ENCODE measurements at regions of chr5 and their contacts with region 1.

Region 1: GRCh38 chr5:10513501-10514442 is 50.1 kb upstream of the ANKRD33B start:
- DNase-seq: no peak
- H3K4me3 Mint-ChIP-seq: no peak overlapping the region
- H3K27ac Mint-ChIP-seq: no peak overlapping the region
- H3K4me1 Mint-ChIP-seq: no peaks in the 10 kb centered on the region
- H3K27me3 Mint-ChIP-seq: peaks cover 5% of the 10 kb centered on the region

Region 2: GRCh38 chr5:9888501-9888901 is 625.3 kb before region 1 on chr5:
- intact Hi-C with region 1: no loop called
- DNase-seq: no peak
- H3K4me3 Mint-ChIP-seq: no peak overlapping the region
- H3K27ac Mint-ChIP-seq: no peak overlapping the region
- H3K4me1 Mint-ChIP-seq: no peaks in the 10 kb centered on the region
- H3K27me3 Mint-ChIP-seq: no peaks in the 10 kb centered on the region

Region 3: GRCh38 chr5:10528056-10528816 is 14.5 kb after region 1 on chr5:
- intact Hi-C with region 1: loop called (anchors 1 kb)
- DNase-seq: no peak
- H3K4me3 Mint-ChIP-seq: no peak overlapping the region
- H3K27ac Mint-ChIP-seq: no peak overlapping the region
- H3K4me1 Mint-ChIP-seq: peaks cover 2% of the 10 kb centered on the region
- H3K27me3 Mint-ChIP-seq: peaks cover 8% of the 10 kb centered on the region

Measured in activated CD4-positive, alpha-beta T cell treated with anti-CD3 and anti-CD28 coated beads, Interleukin-2, amount 10 ng/mL, durations not matched to agents 24 days and 14 days (primary cell).